Sciatic nerve (tissue), 2 donors: ENCODE measurements at regions of chr13 and their contacts with region 1.

Region 1: GRCh38 chr13:99796175-99796819 is 175.3 kb downstream of the ZIC5 start:
- DNase-seq: no peak
- ATAC-seq: no peak

Region 2: DNA sequence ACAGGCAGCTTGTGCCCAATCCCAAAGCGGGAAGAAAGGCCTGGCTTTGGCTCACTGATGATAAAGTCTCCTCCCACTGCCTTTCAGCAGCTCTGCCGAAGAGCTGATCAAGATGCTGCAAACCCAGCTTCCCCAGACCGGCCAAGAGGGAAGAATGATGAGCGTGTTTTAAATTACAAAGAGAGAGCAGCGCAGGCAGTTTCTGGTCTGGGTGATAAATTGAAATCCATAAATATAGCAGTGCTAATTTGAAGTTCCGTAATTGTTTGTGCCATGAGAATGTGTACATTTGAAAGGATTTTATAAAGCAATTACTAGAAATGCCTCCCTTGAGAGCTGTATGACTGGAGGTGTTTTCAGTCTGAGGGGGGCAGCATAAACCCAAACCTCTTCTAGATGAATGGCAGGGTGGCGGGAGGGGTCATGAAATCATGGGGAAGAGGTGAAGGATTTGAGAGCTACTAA is 1391.2 kb before region 1 on chr13:
- intact Hi-C with region 1: no loop called
- DNase-seq: no peak
- ATAC-seq: no peak

Region 3: DNA sequence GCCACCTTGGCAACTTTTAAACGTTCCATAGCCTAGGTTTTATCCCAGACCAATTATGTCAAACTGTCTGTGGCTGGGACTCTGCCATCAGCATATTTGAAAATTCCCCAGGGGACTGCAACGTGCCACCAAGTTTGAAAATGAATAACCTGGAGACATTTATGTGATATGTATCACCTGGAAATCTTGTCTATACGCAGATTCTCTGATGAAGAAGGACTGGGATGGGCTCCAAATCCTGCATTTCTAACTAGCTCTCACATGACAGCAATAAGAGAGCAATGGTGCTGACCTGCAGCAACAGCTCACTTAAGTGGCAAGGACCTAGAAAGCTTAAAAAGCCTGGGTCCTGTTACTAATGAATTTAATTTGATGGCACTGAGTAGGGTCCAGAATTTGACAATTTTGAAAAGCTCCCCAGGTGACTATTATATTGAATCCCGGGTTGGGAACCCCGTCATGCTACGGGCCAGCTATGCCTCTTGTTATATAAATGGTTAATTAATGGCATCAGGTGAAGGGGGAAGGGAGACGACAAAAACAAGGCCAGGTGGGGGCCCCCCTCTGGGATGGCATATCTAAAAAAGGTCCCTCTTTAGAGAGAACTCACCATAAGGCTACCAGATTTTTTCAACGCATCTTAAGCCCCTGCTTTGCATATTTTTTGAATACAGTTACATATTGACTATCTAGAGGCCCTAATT is 38.4 kb before region 1 on chr13:
- intact Hi-C with region 1: loop called (anchors 1 kb)
- DNase-seq: no peak
- ATAC-seq: no peak